Gastrocnemius medialis (tissue), 4 donors: ENCODE measurements at regions of chr2 and their contacts with region 1.

Region 1: GRCh38 chr2:65003037-65003436 is 13.8 kb downstream of the SLC1A4 start:
- DNase-seq: no peak
- ATAC-seq: no peak
- H3K4me3 ChIP-seq: no peak overlapping the region
- H3K27ac ChIP-seq: peak overlapping the region in 1 of 4 donors; percentile 82
- H3K4me1 ChIP-seq: peaks cover 22 to 23% of the 10 kb centered on the region in 2 donors
- H3K27me3 ChIP-seq: no peaks in the 10 kb centered on the region
- CTCF ChIP-seq: no peak
- POLR2A ChIP-seq: no peak

Region 2: DNA sequence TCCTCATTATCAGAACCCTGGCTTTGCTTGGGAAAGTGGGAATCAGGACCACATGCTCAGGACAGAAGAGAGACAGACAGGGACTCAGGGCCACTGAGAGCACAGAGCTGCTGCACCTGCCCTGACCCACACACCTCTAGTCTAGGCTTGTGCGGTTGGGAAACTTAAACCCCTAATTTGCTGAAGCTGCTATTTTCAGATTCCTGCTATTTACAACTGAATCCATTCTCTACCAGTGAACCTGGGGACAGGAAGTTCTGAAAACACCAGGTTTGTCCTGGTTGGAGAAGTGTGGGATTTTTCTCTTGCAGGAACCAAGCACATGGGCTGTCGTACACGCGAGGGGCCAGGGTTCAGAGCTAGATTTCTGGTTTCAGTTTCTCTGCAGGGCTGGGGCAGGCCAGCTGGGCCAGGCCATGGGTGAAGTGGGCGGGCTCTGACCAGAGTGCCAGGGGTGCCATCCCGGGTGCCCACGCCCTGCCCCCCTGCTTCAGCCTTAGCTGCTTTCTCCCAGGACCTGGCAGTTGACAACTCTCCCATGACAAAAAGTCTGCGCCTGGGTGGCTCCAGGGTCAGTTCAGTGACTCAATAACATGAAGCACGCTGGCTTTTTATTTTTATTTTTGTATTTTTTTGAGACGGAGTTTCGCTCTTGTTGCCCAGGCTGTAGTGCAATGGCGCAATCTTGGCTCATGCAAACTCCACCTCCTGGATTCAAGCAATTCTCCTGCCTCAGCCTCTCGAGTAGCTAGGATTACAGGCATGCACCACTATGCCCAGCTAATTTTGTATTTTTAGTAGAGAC is 65.1 kb before region 1 on chr2:
- in situ Hi-C with region 1: no loop called
- intact Hi-C with region 1: loop called (anchors 2 kb)
- DNase-seq: peak; percentile 26 to 89
- ATAC-seq: peak; percentile 42 to 84
- H3K4me3 ChIP-seq: peak overlapping the region; percentile 43 to 52 (median 48)
- H3K27ac ChIP-seq: peak overlapping the region; percentile 87 to 91 (median 90)
- H3K4me1 ChIP-seq: peaks cover 24 to 29% of the 10 kb centered on the region in 2 donors
- H3K27me3 ChIP-seq: no peaks in the 10 kb centered on the region
- CTCF ChIP-seq: peak in 1 of 5 experiments; percentile 15
- POLR2A ChIP-seq: peak in 1 of 2 donors; percentile 14